Heart left ventricle (tissue), 16 donors: ENCODE measurements at regions of chr11 and their contacts with region 1.

Region 1: DNA sequence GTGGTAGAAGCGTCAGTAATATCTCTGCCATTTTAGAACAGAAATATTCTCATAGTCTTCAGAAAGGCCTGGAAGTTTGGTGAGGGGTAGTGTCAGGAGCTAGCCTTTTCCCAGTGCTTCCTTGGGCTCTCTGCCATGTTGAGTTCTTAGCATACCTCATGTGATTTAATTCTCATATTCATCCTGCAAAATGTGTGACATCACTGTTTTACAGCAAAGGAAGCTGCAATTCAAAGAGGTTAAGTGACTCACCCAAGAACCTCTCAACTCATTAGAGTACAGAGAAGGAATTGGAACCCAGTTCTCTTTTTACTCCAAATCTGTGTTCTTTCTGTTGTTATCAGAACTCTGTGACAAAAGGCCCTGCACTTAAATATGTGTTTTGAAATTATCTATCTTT is 72.1 kb downstream of the RNF169 start:
- DNase-seq: no peak
- ATAC-seq: peak in 3 of 4 donors; percentile 45 to 48 (median 45)
- H3K4me3 ChIP-seq: no peak overlapping the region
- H3K27ac ChIP-seq: peak overlapping the region in 2 of 12 donors; percentile 13 to 34
- H3K4me1 ChIP-seq: peaks cover 4 to 56% (median 21%) of the 10 kb centered on the region in 12 donors
- H3K27me3 ChIP-seq: no peaks in the 10 kb centered on the region
- CTCF ChIP-seq: no peak
- POLR2A ChIP-seq: no peak

Region 2: DNA sequence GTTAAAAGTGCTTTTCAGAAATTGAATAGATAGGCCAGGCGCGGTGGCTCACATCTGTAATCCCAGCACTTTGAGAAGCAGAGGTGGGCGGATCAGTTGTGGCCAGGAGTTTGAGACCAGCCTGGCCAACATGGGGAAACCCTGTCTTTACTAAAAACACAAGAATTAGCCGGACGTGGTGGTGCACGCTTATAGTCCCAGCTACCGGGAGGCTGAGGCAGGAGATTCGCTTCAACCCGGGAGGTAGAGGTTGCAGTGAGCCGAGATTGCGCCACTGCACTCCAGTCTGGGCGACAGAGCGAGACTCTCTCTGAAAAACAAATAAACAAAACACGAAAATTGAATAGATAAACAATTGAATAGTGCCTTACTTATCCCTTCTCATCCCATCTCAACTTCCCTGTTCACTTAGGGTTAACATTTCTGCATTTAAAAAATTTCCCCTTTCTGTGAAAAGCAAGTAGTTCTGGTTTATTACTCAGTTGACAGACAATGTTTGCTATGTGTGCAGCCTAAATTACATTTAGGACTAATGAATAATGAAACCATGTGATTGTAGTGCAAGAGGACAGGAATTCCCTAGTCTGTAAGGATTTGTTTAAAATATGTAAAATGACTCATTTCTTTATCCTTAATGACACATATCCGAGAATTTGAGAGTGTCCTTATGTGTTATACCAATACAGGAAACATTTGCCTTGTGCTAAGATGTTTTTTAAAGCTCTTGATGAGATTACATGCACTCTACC is 66.1 kb before region 1 on chr11:
- intact Hi-C with region 1: loop called in 1 of 10 experiments (anchors 5 kb)
- DNase-seq: no peak
- ATAC-seq: peak in 1 of 4 donors; percentile 65
- H3K4me3 ChIP-seq: no peak overlapping the region
- H3K27ac ChIP-seq: peak overlapping the region in 2 of 12 donors; percentile 43 to 68
- H3K4me1 ChIP-seq: peaks cover 8 to 69% (median 29%) of the 10 kb centered on the region in 12 donors
- H3K27me3 ChIP-seq: no peaks in the 10 kb centered on the region
- CTCF ChIP-seq: no peak
- POLR2A ChIP-seq: no peak

Region 3: DNA sequence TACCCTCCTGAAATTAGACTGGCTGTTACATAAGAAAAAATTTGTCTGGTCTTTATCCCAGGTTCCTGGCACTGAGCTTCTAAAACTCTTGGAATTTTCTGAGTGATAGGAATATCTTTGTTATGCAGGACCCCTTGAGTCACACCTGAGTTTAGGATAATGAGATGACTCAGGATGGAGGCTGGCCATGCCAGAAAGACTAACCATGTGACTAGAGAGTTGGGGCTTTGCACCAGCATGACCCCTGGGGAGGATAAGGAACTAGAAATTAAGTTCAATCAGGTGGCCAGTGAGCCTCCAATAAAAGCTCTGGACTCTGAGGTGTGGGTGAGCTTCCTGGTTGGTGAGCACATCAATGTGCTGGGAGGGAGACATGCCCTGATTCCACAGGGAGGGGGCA is 40.0 kb after region 1 on chr11:
- intact Hi-C with region 1: loop called in 1 of 10 experiments (anchors 2 kb)
- DNase-seq: no peak
- ATAC-seq: no peak
- H3K4me3 ChIP-seq: no peak overlapping the region
- H3K27ac ChIP-seq: no peak overlapping the region
- H3K4me1 ChIP-seq: no peaks in the 10 kb centered on the region
- H3K27me3 ChIP-seq: no peaks in the 10 kb centered on the region
- CTCF ChIP-seq: no peak
- POLR2A ChIP-seq: no peak